CD4-positive, alpha-beta memory T cell (primary cell): ENCODE measurements at regions of chr19 and their contacts with region 1.

Region 1: DNA sequence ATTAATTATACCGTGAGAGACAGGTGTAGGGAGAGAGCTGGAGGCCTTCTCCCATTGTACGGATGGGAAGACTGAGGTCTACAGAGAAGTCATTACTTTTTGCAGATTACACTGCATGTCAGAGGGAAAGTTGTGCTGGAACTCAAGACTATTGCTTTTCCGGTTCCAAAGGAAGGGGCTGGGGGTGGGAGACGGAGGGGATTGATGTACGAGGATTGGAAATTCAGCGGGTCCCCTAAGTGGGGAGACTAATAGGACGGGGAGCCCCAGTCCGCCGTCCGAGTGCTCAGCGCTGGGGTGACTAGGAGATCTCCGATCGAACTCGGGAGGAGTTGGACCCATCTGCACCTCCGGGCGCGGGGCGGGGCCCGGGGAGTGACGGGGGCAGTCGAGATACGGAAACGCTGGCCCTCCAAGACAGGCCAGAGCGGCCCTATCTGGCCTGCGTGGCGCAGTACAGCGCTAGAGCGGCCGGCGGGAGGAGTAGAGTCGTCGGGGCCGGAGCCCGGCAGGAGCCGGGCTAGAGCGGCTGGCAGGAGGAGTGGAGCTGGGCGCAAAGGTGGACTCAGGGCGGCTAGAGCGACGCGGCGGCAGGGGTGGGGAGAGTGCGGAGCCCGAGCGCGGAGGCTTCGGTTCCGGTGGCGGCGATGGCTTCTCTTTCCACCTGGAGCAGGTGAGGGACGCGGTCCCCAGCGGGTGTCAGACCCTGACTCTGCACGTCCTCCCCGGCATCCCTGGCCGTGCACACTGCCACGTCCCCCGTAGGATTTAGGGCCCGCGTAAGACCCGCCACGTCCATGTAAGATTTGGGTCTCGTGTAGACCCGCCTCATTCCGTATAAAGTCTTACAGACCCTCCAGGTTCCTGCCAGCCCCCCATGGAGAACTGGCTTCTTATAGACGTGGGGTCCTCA is 1.1 kb downstream of the ARHGEF1 start:
- DNase-seq: peak; percentile 82 to 86 (median 83)
- H3K4me3 ChIP-seq: peak overlapping the region; percentile 45 to 94
- H3K4me3 Mint-ChIP-seq: peak overlapping the region; percentile 86 to 99 (median 96)
- H3K27ac ChIP-seq: peak overlapping the region; percentile 82
- H3K27ac Mint-ChIP-seq: peak overlapping the region; percentile 90 to 99 (median 96)
- H3K4me1 ChIP-seq: peaks cover 71% of the 10 kb centered on the region
- H3K4me1 Mint-ChIP-seq: peaks cover 36 to 90% (median 57%) of the 10 kb centered on the region in 4 donors
- H3K27me3 ChIP-seq: no peaks in the 10 kb centered on the region
- H3K27me3 Mint-ChIP-seq: no peaks in the 10 kb centered on the region

Region 2: GRCh38 chr19:41795031-41795461 is 89.0 kb before region 1 on chr19:
- CTCF ChIA-PET with region 1: no interaction called
- POLR2A ChIA-PET with region 1: no interaction called
- intact Hi-C with region 1: no loop called
- DNase-seq: peak; percentile 54 to 65 (median 58)
- H3K4me3 ChIP-seq: no peak overlapping the region
- H3K4me3 Mint-ChIP-seq: no peak overlapping the region
- H3K27ac ChIP-seq: no peak overlapping the region
- H3K27ac Mint-ChIP-seq: no peak overlapping the region
- H3K4me1 ChIP-seq: no peaks in the 10 kb centered on the region
- H3K4me1 Mint-ChIP-seq: peaks cover 0 to 4% (median under 1%) of the 10 kb centered on the region in 4 donors
- H3K27me3 ChIP-seq: no peaks in the 10 kb centered on the region
- H3K27me3 Mint-ChIP-seq: peaks cover 27 to 31% of the 10 kb centered on the region in 2 donors

Region 3: GRCh38 chr19:41866284-41866683 is 17.8 kb before region 1 on chr19:
- CTCF ChIA-PET with region 1: interaction called, 142 read pairs
- POLR2A ChIA-PET with region 1: interaction called, 579 read pairs
- intact Hi-C with region 1: no loop called
- DNase-seq: peak in 1 of 5 donors; percentile 33
- H3K4me3 ChIP-seq: no peak overlapping the region
- H3K4me3 Mint-ChIP-seq: peak overlapping the region in 3 of 8 donors; percentile 15 to 59 (median 50)
- H3K27ac ChIP-seq: peak overlapping the region; percentile 22
- H3K27ac Mint-ChIP-seq: peak overlapping the region; percentile 71 to 93 (median 81)
- H3K4me1 ChIP-seq: peaks cover 94% of the 10 kb centered on the region
- H3K4me1 Mint-ChIP-seq: peaks cover 45 to 84% (median 67%) of the 10 kb centered on the region in 4 donors
- H3K27me3 ChIP-seq: no peaks in the 10 kb centered on the region
- H3K27me3 Mint-ChIP-seq: no peaks in the 10 kb centered on the region

Region 4: DNA sequence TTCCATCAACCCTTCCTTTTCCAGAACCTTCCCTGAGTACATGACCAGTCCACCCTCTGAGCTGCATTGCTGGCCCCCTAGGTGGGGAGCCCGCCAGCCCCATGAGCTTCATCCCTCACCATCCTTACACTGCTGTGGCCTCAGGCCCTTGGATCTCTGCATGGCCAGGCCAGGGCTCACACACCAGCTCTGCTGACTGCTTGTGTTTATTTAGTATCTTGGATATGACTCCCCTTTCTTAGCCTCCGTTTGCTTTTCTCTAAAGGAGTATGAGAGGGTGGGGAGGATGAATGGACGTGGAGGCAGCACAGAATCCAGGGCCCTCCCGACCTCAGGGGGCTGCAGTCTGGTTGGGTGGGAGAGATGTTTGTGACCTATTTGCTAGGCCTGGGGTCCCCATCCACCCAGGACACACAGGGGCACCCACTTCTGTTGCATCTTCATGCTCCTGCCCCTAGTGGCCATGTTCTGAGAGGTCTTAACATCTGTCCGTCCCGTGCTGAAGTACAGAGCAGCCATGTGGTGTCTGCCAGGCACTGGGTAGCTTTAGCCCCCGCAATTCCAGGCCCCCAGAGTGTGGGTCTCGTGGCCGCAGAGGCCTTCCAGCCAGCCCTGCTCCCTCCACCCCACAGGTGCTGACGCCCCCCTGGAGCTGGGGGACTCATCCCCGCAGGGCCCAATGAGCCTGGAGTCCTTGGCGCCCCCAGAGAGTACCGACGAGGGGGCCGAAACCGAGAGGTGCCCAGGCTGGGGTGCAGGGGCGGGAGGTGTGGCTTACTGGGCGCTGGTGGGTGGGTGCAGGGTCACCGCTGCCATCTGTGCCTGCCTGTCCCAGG is 11.9 kb after region 1 on chr19:
- CTCF ChIA-PET with region 1: interaction called, 5 read pairs
- POLR2A ChIA-PET with region 1: interaction called, 349 read pairs
- intact Hi-C with region 1: no loop called
- DNase-seq: no peak
- H3K4me3 ChIP-seq: no peak overlapping the region
- H3K4me3 Mint-ChIP-seq: peak overlapping the region in 4 of 8 donors; percentile 10 to 49 (median 42)
- H3K27ac ChIP-seq: peak overlapping the region; percentile 16
- H3K27ac Mint-ChIP-seq: peak overlapping the region; percentile 46 to 90 (median 85)
- H3K4me1 ChIP-seq: peaks cover 52% of the 10 kb centered on the region
- H3K4me1 Mint-ChIP-seq: peaks cover 23 to 62% (median 36%) of the 10 kb centered on the region in 4 donors
- H3K27me3 ChIP-seq: no peaks in the 10 kb centered on the region
- H3K27me3 Mint-ChIP-seq: no peaks in the 10 kb centered on the region

Region 5: GRCh38 chr19:41928221-41928683 is 44.2 kb after region 1 on chr19 and contains the start of gene ERFL:
- CTCF ChIA-PET with region 1: interaction called, 4 read pairs
- POLR2A ChIA-PET with region 1: interaction called, 156 read pairs
- intact Hi-C with region 1: loop called (anchors 2 kb)
- DNase-seq: peak in 1 of 5 donors; percentile 28
- H3K4me3 ChIP-seq: peak within 1 kb of the TSS; percentile 57 to 74
- H3K4me3 Mint-ChIP-seq: peak within 1 kb of the TSS; percentile 86 to 98 (median 94)
- H3K27ac ChIP-seq: peak within 1 kb of the TSS; percentile 33
- H3K27ac Mint-ChIP-seq: peak within 1 kb of the TSS; percentile 75 to 96 (median 89)
- H3K4me1 ChIP-seq: peaks cover 27% of the 10 kb centered on the region
- H3K4me1 Mint-ChIP-seq: peaks cover 18 to 37% (median 23%) of the 10 kb centered on the region in 4 donors
- H3K27me3 ChIP-seq: no peaks in the 10 kb centered on the region
- H3K27me3 Mint-ChIP-seq: no peaks in the 10 kb centered on the region
- total RNA-seq, gene ERFL: 6.6 to 9.2 TPM

Region 6: GRCh38 chr19:41939861-41940730 is 56.0 kb after region 1 on chr19:
- CTCF ChIA-PET with region 1: interaction called, 15 read pairs
- POLR2A ChIA-PET with region 1: interaction called, 106 read pairs
- intact Hi-C with region 1: loop called (anchors 1 kb)
- DNase-seq: peak in 2 of 5 donors; percentile 28 to 55
- H3K4me3 ChIP-seq: peak overlapping the region in 1 of 2 donors; percentile 43
- H3K4me3 Mint-ChIP-seq: peak overlapping the region; percentile 84 to 90 (median 86)
- H3K27ac ChIP-seq: no peak overlapping the region
- H3K27ac Mint-ChIP-seq: peak overlapping the region; percentile 57 to 93 (median 90)
- H3K4me1 ChIP-seq: peaks cover 35% of the 10 kb centered on the region
- H3K4me1 Mint-ChIP-seq: peaks cover 17 to 53% (median 34%) of the 10 kb centered on the region in 4 donors
- H3K27me3 ChIP-seq: no peaks in the 10 kb centered on the region
- H3K27me3 Mint-ChIP-seq: peaks cover 1 to 5% of the 10 kb centered on the region in 2 donors

Region 7: GRCh38 chr19:41951686-41952172 is 67.7 kb after region 1 on chr19:
- CTCF ChIA-PET with region 1: interaction called, 15 read pairs
- POLR2A ChIA-PET with region 1: interaction called, 106 read pairs
- intact Hi-C with region 1: loop called (anchors 1 kb)
- DNase-seq: peak; percentile 72 to 83 (median 76)
- H3K4me3 ChIP-seq: no peak overlapping the region
- H3K4me3 Mint-ChIP-seq: peak overlapping the region in 2 of 8 donors; percentile 5 to 42
- H3K27ac ChIP-seq: no peak overlapping the region
- H3K27ac Mint-ChIP-seq: peak overlapping the region; percentile 42 to 90 (median 81)
- H3K4me1 ChIP-seq: peaks cover 12% of the 10 kb centered on the region
- H3K4me1 Mint-ChIP-seq: peaks cover 10 to 30% (median 15%) of the 10 kb centered on the region in 4 donors
- H3K27me3 ChIP-seq: no peaks in the 10 kb centered on the region
- H3K27me3 Mint-ChIP-seq: no peaks in the 10 kb centered on the region